AG04449 (cell line): ENCODE measurements at regions of chr15 and their contacts with region 1.

Region 1: DNA sequence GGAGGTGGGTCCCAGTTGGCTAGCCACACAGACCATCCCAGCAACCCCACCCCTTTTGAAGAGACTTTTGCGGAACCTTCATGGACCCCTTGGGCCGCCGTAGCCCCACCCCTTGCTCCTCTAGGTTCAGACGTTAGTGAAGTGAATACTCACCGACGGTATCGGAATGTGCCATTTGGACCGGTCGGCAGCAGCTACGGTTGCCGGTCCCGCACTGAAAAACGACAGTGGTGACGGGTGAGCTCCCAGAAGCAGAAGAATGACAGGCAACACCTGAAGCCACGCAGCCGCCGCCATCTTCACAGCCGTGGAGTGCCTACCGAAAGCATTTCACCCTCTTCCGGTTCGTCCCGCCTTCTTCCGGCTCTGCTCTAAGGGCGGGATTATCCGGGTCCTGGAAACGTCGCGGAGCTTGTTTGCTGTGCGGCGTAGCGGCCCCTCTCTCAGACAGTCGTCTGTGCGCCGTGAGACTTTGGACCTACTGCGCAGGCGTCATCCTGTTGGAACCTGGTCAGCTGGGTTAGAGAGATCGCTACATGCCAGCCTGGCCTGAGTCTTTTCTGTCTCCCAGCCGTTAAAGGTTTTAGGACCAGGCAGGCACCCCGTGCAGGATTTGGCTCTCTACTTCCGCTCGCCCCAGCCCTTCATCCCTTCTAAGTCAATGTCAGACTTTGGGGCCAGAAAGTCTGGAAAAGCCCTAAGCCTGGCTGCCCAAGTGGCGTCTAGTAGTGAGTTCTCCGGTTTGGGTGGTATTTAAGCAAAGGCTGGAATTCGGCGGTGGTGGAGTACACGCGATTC is at the starts of genes GANC and TMEM87A:
- DNase-seq: peak; percentile 95
- H3K4me3 ChIP-seq: peak within 1 kb of the TSS; percentile 95
- CTCF ChIP-seq: no peak

Region 2: GRCh38 chr15:42348083-42348482 is 74.8 kb after region 1 on chr15:
- CTCF ChIA-PET with region 1: no interaction called
- POLR2A ChIA-PET with region 1: interaction called, 10 read pairs
- DNase-seq: peak; percentile 24
- H3K4me3 ChIP-seq: no peak overlapping the region
- CTCF ChIP-seq: no peak